ENCODE measurements at regions of chr16 and their contacts with region 1.

Region 1: DNA sequence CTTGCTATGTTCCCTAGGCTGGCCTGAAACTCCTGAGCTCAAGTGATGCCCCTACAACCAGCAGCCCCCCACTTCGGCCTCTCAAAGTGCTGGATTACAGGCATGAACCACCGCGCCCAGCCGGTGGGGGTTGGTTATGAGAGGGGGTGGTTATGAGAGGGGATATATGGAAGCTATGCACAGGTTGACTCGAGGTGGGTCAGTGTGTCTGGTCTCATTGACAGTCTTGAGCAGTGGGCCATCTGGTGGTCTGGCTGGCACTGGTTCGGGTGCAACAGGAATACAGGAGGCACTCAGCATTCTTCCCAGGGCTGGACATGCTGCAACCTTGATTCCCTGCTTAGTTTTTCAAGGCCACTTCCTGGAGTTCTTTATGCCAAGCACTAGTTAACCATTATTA is 5.6 kb upstream of the STX1B start:
- DNase-seq: no peak
- ATAC-seq: peak; percentile 57; the same call in 1 of the 2 replicates
- H3K4me3 ChIP-seq: no peak overlapping the region
- H3K27ac ChIP-seq: no peak overlapping the region
- H3K4me1 ChIP-seq: no peaks in the 10 kb centered on the region
- H3K27me3 ChIP-seq: no peaks in the 10 kb centered on the region
- CTCF ChIP-seq: no peak

Region 2: GRCh38 chr16:30698139-30698815 is 317.7 kb before region 1 on chr16:
- CTCF ChIA-PET with region 1: no interaction called
- POLR2A ChIA-PET with region 1: no interaction called
- in situ Hi-C with region 1: no loop called
- intact Hi-C with region 1: no loop called
- DNase-seq: peak; percentile 86
- ATAC-seq: peak; percentile 85
- H3K4me3 ChIP-seq: peak overlapping the region; percentile 83 to 91
- H3K27ac ChIP-seq: peak overlapping the region; percentile 97
- H3K4me1 ChIP-seq: peaks cover 19% of the 10 kb centered on the region
- H3K27me3 ChIP-seq: no peaks in the 10 kb centered on the region
- CTCF ChIP-seq: no peak

Region 3: DNA sequence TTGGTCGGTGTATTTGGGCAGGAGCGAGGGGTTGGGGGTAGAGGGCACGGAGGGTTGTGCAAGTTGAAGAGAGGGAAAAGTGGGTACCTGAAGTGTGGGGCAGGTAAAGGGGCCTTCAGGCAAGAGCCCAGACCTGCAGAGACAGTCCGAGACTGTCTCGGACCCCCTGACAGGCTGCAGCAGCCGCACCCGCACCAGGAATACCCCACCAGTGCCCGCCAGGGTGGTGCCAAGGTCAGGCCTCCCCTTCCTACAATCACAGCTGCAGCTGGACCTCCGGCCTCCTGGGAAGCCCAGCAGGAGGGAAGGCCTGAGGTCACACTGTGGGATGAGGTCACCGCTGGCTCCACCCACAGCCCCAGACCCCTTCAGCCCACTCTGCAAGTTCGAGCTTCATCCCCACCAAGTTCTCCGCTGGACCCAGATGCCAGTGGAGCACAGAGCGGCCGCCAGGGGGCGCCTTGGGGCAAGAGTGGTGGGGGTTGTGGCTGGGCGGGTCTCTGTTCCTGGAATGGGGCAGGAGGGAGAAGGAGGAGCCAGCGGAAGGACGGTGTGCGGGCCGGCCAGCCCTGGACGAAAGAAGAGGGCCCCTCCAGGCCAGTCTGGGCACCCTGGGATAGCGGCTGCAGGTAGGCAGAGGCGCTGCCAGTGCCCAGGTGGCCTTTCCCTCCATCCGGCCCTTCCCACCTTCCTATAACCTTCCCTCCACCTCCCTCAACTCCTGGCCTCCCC is 31.2 kb before region 1 on chr16 and contains the start of gene HSD3B7:
- CTCF ChIA-PET with region 1: interaction called, 12 read pairs
- POLR2A ChIA-PET with region 1: no interaction called
- in situ Hi-C with region 1: no loop called
- intact Hi-C with region 1: no loop called
- DNase-seq: peak; percentile 51
- ATAC-seq: peak; percentile 90
- H3K4me3 ChIP-seq: peak within 1 kb of the TSS; percentile 4 to 39; a peak in 2 of 4 replicates
- H3K27ac ChIP-seq: no peak within 1 kb of the TSS
- H3K4me1 ChIP-seq: peaks cover 9% of the 10 kb centered on the region
- H3K27me3 ChIP-seq: no peaks in the 10 kb centered on the region
- CTCF ChIP-seq: peak; percentile 97
- total RNA-seq, gene HSD3B7: 5.4 TPM

Region 4: GRCh38 chr16:31108035-31108793 is 92.2 kb after region 1 on chr16 and contains the start of gene BCKDK:
- CTCF ChIA-PET with region 1: no interaction called
- POLR2A ChIA-PET with region 1: no interaction called
- in situ Hi-C with region 1: no loop called
- intact Hi-C with region 1: no loop called
- DNase-seq: no peak
- ATAC-seq: peak; percentile 95
- H3K4me3 ChIP-seq: peak within 1 kb of the TSS; percentile 78 to 94
- H3K27ac ChIP-seq: peak within 1 kb of the TSS; percentile 81
- H3K4me1 ChIP-seq: peaks cover 9% of the 10 kb centered on the region
- H3K27me3 ChIP-seq: no peaks in the 10 kb centered on the region
- CTCF ChIP-seq: no peak
- total RNA-seq, gene BCKDK: 60.4 TPM

Region 5: GRCh38 chr16:31138621-31139578 is 122.9 kb after region 1 on chr16:
- CTCF ChIA-PET with region 1: no interaction called
- POLR2A ChIA-PET with region 1: no interaction called
- in situ Hi-C with region 1: no loop called
- intact Hi-C with region 1: no loop called
- DNase-seq: no peak
- ATAC-seq: no peak
- H3K4me3 ChIP-seq: no peak overlapping the region
- H3K27ac ChIP-seq: no peak overlapping the region
- H3K4me1 ChIP-seq: peaks cover 16% of the 10 kb centered on the region
- H3K27me3 ChIP-seq: no peaks in the 10 kb centered on the region
- CTCF ChIP-seq: no peak

Region 6: GRCh38 chr16:31569360-31569717 is 553.3 kb after region 1 on chr16:
- CTCF ChIA-PET with region 1: no interaction called
- POLR2A ChIA-PET with region 1: no interaction called
- in situ Hi-C with region 1: no loop called
- intact Hi-C with region 1: no loop called
- DNase-seq: no peak
- ATAC-seq: no peak
- H3K4me3 ChIP-seq: no peak overlapping the region
- H3K27ac ChIP-seq: no peak overlapping the region
- H3K4me1 ChIP-seq: no peaks in the 10 kb centered on the region
- H3K27me3 ChIP-seq: no peaks in the 10 kb centered on the region
- CTCF ChIP-seq: no peak

Measured in Panc1 (cell line).